H1 (cell line): ENCODE measurements at regions of chr1 and their contacts with region 1.

Region 1: DNA sequence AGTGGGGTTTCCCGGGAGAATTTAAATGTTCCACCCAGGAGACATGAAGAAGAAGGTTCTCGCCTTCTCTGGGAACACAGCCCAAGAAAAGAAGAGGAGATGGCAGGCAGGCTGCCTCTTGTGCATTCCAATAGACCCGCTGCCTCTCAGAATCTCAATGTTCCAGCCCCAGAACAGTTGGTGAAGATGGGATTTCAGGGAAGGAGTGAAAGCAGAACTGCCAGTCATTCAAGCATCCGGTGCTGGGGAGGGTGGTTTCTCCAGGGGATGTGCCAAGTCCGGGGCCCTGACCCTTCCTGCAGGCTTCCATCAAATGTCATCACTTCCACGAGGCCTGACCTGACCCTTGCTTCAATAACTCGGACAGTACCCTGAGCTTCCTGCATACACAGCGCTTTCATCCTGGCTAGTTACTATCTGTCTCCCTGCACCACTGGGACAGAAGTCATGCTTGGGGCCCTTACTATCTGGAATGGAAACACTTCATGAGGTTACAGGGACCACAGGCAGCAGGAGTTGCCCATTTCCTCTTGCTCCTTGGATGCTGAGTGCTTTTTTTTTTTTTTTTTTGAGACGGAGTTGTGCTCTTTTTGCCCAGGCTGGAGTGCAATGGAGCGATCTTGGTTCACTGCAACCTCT is 386.6 kb upstream of the POU3F1 start:
- DNase-seq: no peak
- H3K4me3 ChIP-seq: no peak overlapping the region
- H3K27ac ChIP-seq: no peak overlapping the region
- H3K4me1 ChIP-seq: peaks cover 0 to 13% (median 10%) of the 10 kb centered on the region in 4 experiments; a peak in 5 of 7 replicates
- H3K27me3 ChIP-seq: no peaks in the 10 kb centered on the region; a peak in 1 of 7 replicates
- CTCF ChIP-seq: no peak
- EP300 ChIP-seq: no peak
- POLR2A ChIP-seq: peak in 1 of 2 experiments; percentile 79; a peak in 2 of 3 replicates
- RAD21 ChIP-seq: peak in 1 of 2 experiments; percentile 1; a peak in 1 of 4 replicates

Region 2: DNA sequence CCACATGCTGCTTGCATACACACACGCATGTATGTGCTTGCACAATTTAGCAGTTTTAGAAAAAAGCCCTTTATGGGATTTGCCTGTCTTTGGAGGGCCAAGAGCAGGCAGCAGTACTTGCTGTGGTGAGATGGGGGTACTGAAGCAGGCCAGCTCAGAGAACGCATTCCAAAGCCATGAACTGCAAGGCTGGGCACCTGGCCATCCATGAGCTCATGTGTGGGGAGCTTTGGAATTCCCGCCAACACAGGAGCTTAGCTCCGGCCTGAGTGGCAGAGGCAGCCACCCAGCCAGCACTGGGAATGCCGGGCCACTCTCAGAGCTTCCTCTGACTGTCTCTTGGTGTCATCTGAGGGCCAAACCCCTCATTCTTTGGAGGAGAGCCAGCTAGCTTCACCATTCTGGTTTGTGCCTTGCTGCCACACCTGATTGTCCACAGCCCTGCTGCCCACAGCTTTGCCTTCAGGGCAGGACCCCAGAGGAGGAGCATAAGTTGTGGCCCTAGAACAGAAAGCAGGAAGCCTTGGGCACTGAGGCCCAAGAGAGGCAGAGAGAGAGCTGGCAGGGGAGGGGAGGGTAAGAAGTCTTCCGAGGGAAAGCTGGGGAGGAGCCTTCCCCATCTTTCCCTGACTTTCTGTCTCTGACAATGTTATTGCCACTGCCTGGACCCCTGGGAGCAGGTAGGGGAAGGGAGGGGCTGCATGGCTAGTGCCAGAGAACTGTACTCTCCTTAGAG is 294.5 kb before region 1 on chr1:
- CTCF ChIA-PET with region 1: no interaction called
- POLR2A ChIA-PET with region 1: interaction called, 12 read pairs
- DNase-seq: no peak
- H3K4me3 ChIP-seq: no peak overlapping the region
- H3K27ac ChIP-seq: no peak overlapping the region
- H3K4me1 ChIP-seq: peaks cover 17 to 46% (median 31%) of the 10 kb centered on the region in 4 experiments
- H3K27me3 ChIP-seq: peaks cover 2 to 20% (median 14%) of the 10 kb centered on the region in 4 experiments; a peak in 6 of 7 replicates
- CTCF ChIP-seq: no peak
- EP300 ChIP-seq: no peak
- POLR2A ChIP-seq: no peak
- RAD21 ChIP-seq: no peak

Region 3: GRCh38 chr1:38451541-38451993 is 18.4 kb after region 1 on chr1:
- CTCF ChIA-PET with region 1: interaction called, 4 read pairs
- POLR2A ChIA-PET with region 1: interaction called, 190 read pairs
- DNase-seq: peak in 1 of 2 experiments; percentile 53
- H3K4me3 ChIP-seq: peak overlapping the region in 1 of 4 experiments; percentile 14; a peak in 1 of 8 replicates
- H3K27ac ChIP-seq: no peak overlapping the region
- H3K4me1 ChIP-seq: peaks cover 2 to 11% (median 8%) of the 10 kb centered on the region in 4 experiments; a peak in 5 of 7 replicates
- H3K27me3 ChIP-seq: no peaks in the 10 kb centered on the region; a peak in 1 of 7 replicates
- CTCF ChIP-seq: no peak
- EP300 ChIP-seq: no peak
- POLR2A ChIP-seq: no peak
- RAD21 ChIP-seq: no peak

Region 4: DNA sequence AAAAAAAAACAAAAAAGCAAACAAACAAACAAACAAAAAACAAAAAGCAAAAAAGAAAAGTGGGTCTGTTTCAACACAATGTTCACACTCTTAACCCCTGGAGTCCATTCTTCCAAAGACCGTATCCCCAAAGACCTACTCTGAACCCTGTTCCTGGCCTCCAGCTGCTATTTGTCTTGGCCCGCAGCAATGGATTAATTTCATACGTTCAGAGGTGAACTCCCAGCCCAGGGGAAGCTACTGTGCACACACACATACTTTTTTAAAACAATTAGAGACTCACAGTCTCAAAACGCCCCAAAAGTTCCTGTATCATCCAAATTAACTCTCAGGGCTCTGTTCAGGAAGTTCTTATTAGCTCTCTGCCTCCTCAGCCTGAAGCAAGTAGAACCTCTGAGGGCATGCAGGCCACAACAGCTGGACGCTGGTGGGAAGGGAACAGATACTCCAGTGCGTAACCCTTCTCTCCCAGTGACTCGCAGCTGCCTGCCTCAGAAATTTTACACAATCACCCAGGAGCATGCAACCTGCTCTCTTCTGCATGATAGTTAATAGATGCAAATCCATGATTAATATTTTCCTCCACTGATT is 31.0 kb after region 1 on chr1:
- CTCF ChIA-PET with region 1: no interaction called
- POLR2A ChIA-PET with region 1: interaction called, 190 read pairs
- DNase-seq: no peak
- H3K4me3 ChIP-seq: no peak overlapping the region
- H3K27ac ChIP-seq: no peak overlapping the region
- H3K4me1 ChIP-seq: peaks cover 0 to 9% (median 4%) of the 10 kb centered on the region in 4 experiments; a peak in 5 of 7 replicates
- H3K27me3 ChIP-seq: no peaks in the 10 kb centered on the region; a peak in 1 of 7 replicates
- CTCF ChIP-seq: no peak
- EP300 ChIP-seq: no peak
- POLR2A ChIP-seq: no peak
- RAD21 ChIP-seq: no peak

Region 5: DNA sequence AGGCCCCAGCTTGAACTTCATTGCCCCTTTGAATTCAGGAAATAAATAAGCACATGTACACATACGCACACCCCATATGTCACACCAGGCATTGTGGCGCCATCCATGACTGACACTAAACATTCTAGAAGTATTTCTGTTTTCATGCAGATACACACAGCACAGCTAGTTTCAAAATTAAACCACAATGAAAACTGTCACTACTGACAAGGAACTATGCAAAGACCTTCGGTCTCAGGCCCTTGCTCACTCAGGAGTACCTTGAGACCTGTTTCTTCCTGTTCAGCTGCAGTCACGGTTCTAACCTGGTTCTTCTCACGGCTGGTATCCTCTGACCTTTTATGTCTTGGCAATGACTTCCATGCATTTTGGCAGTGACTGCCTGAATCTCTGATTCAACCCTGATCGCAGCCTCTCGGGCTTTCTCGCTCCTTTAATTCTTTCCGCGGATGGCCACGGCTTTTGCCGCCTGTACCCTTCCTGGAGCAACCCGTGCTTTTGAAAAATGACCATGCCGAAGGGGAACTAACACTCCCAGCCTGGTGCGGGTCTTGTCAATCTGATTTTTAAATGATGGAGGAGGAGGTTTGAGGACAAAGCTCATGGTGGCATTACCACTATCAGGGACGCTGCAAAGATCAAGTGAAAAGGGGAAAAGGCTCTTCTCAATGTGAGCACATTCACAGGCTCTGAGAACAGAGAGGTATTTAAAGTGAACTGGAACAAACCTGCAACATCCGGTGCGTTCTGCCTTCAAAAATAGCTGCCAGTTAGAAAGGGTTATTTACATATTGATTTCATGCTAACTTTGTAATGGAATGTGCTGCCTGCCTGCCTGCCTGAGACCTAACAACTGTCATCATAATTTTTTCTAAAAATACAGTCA is 41.8 kb after region 1 on chr1:
- CTCF ChIA-PET with region 1: no interaction called
- POLR2A ChIA-PET with region 1: interaction called, 29 read pairs
- DNase-seq: no peak
- H3K4me3 ChIP-seq: peak overlapping the region in 1 of 4 experiments; percentile 61; a peak in 4 of 8 replicates
- H3K27ac ChIP-seq: no peak overlapping the region
- H3K4me1 ChIP-seq: peaks cover 6 to 16% (median 12%) of the 10 kb centered on the region in 4 experiments; a peak in 6 of 7 replicates
- H3K27me3 ChIP-seq: peaks cover 0 to 7% (median 0%) of the 10 kb centered on the region in 4 experiments; a peak in 3 of 7 replicates
- CTCF ChIP-seq: no peak
- EP300 ChIP-seq: no peak
- POLR2A ChIP-seq: peak in 1 of 2 experiments; percentile 21; a peak in 1 of 3 replicates
- RAD21 ChIP-seq: no peak